ENCODE measurements at regions of chr3 and their contacts with region 1.

Region 1: GRCh38 chr3:145448436-145448835 is 712.5 kb downstream of the PLOD2 start:
- DNase-seq: peak; percentile 75
- ATAC-seq: peak; percentile 69
- H3K4me3 ChIP-seq: no peak overlapping the region
- H3K27ac ChIP-seq: peak overlapping the region; percentile 62
- H3K4me1 ChIP-seq: peaks cover 26% of the 10 kb centered on the region
- H3K27me3 ChIP-seq: no peaks in the 10 kb centered on the region
- CTCF ChIP-seq: no peak

Region 2: GRCh38 chr3:143865302-143865701 is 1583.1 kb before region 1 on chr3:
- CTCF ChIA-PET with region 1: no interaction called
- POLR2A ChIA-PET with region 1: interaction called, 11 read pairs
- intact Hi-C with region 1: no loop called
- DNase-seq: no peak
- ATAC-seq: no peak
- H3K4me3 ChIP-seq: no peak overlapping the region
- H3K27ac ChIP-seq: no peak overlapping the region
- H3K4me1 ChIP-seq: no peaks in the 10 kb centered on the region
- H3K27me3 ChIP-seq: no peaks in the 10 kb centered on the region
- CTCF ChIP-seq: no peak